CD4-positive, alpha-beta T cell (primary cell): ENCODE measurements at regions of chr2 and their contacts with region 1.

Region 1: DNA sequence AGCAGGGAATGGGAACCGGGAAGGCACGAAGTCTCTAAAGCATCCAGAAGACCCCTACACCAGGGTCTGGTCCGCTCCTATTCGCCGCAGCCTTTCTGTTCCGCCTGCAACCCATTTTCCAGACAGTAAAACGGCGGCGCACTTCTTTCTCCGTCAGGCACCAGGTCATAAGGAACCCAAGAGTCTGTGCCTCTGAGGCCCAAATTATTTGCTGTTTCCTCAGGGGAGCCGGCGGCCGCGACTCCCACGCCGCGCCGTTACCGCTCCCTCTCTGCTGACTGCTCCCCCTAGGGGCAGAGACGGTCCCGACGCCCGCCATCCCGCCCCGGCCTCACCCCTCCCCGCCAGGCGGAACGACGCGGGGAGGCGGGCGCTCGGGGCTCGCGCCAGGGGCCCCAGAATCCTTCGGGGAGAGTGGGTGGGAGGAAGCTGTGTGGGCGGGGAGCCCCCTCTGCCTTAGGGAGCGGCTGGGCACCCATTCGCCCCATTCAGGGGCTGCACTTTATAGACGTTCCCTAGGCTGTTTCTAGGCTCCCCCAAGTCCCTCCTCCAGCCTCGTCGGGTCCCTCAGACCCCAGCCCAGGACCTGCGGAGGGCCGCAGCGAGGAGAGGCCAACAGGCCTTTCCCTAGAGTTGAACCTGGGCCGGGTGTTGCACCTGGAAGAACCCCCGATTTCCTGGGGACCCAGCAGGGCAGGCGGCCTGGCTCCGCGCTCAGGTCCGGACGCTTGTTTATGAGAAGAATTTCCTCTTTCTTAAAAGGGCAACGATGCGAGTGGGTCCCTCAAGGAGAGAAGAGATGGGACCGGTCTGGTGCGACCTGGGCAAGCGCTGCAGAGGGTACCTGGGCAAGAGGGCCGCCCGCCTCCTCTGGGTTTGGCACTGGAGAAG is 3.6 kb upstream of the CTDSP1 start:
- DNase-seq: peak; percentile 88 to 98 (median 93)
- ATAC-seq: peak; percentile 67
- H3K4me3 ChIP-seq: peak overlapping the region; percentile 71
- H3K4me3 Mint-ChIP-seq: peak overlapping the region; percentile 94
- H3K27ac ChIP-seq: peak overlapping the region; percentile 93 to 96
- H3K27ac Mint-ChIP-seq: peak overlapping the region; percentile 99
- H3K4me1 ChIP-seq: peaks cover 58% of the 10 kb centered on the region
- H3K4me1 Mint-ChIP-seq: peaks cover 41% of the 10 kb centered on the region
- H3K27me3 ChIP-seq: no peaks in the 10 kb centered on the region
- H3K27me3 Mint-ChIP-seq: no peaks in the 10 kb centered on the region
- CTCF ChIP-seq: peak; percentile 75

Region 2: DNA sequence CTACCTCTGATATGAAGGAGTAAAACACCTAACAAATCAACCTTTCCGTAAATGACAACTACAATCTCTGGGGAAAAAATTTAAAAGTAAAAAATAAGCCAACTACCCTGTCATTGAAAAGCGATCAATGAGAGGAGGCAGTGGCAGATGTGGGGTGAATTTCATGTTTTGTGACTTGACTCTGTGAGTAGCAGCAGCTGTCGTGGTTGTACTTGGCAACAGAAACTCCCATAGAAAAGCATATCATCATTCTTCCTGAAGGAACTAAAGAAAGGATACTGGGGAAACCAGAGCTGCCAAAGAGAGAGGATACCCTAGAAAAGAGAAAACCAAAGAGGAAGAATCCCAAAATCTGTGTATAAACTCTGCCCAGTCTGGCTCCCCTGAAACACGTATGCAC is 629.7 kb before region 1 on chr2:
- CTCF ChIA-PET with region 1: no interaction called
- POLR2A ChIA-PET with region 1: no interaction called
- intact Hi-C with region 1: no loop called
- DNase-seq: no peak
- ATAC-seq: no peak
- H3K4me3 ChIP-seq: no peak overlapping the region
- H3K4me3 Mint-ChIP-seq: no peak overlapping the region
- H3K27ac ChIP-seq: no peak overlapping the region
- H3K27ac Mint-ChIP-seq: no peak overlapping the region
- H3K4me1 ChIP-seq: no peaks in the 10 kb centered on the region
- H3K4me1 Mint-ChIP-seq: no peaks in the 10 kb centered on the region
- H3K27me3 ChIP-seq: no peaks in the 10 kb centered on the region
- H3K27me3 Mint-ChIP-seq: peaks cover 9% of the 10 kb centered on the region
- CTCF ChIP-seq: no peak

Region 3: DNA sequence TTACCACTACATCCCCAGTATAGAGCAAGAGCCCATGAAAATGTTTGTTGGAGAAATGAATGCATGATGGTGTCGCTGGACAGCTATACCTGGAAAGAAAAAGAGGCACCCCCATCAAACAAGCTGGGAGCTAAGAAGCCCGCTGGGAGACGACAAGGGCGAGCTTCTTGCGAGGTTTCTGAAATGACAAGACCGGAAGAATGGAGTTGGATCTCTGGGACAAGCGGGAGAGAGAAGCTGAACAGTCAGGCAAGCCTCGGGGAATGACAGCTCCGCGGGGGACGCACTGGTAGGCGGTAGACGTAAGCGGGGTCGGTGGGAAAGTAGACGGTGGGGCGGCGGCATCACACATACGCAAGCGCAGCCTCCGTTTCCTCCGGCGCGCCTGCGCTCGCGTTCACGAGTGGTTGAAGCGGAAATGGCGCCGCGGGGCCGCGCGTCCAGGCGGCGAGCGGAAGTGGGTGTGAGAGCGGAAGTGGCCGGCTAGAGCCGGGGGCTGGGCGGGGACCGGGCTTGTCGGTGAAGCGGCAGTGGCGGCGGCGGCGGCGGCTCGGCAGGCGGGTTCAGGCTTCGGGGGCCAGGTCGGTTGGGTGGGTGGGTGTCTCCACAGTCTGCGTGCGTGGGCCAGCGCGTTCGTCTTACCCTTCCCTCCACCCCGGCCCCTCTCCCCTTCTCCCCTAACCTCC is 179.2 kb before region 1 on chr2 and contains the start of gene ARPC2:
- CTCF ChIA-PET with region 1: no interaction called
- POLR2A ChIA-PET with region 1: interaction called, 9 read pairs
- intact Hi-C with region 1: loop called (anchors 5 kb)
- DNase-seq: peak; percentile 90 to 98 (median 93)
- ATAC-seq: peak; percentile 73
- H3K4me3 ChIP-seq: peak within 1 kb of the TSS; percentile 80
- H3K4me3 Mint-ChIP-seq: peak within 1 kb of the TSS; percentile 95
- H3K27ac ChIP-seq: peak within 1 kb of the TSS; percentile 96 to 99
- H3K27ac Mint-ChIP-seq: peak within 1 kb of the TSS; percentile 96
- H3K4me1 ChIP-seq: peaks cover 36% of the 10 kb centered on the region
- H3K4me1 Mint-ChIP-seq: peaks cover 45% of the 10 kb centered on the region
- H3K27me3 ChIP-seq: no peaks in the 10 kb centered on the region
- H3K27me3 Mint-ChIP-seq: no peaks in the 10 kb centered on the region
- CTCF ChIP-seq: no peak
- total RNA-seq, gene ARPC2: 448 to 452 TPM

Region 4: DNA sequence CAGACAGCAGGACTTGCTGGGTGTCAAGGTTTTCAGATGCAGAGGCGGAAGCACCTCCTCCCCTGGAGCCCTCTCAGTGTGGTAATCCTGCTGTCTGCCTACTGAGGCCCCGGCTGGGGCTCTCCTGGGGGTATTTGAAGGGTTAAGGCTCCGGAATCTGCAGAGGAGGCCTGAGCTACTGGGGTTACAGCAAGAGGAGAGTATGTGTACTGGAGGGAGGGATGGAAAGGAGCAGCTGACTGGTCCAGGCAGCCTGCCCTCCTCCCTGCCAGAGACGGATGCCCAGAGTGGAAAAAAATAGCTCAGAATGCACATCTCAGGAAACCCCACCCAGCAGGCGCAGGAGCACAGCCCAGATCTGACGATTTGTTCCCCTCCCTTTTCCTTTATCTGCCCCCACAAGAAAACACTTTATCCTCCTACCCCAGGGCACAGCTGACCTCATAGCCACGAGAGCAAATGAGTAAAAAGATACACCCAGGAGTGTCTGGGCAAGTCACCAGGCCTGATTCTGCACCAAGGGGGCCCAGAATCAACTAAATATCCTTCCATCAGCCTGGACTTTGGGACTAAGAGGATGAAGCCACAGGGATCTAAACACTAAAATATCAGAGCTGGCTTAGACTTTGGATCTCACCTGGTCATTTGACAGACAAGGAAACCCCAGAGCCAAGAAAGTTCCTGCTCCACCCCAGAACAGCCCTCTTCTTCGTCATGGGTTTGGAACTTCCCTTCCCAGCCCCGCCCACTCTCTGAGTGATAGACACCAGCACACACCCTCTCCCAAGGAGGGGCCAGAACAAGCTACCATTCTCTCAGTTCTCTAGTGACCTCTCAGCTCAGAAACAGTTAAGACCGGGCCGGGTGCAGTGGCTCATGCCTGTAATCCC is 109.2 kb before region 1 on chr2:
- CTCF ChIA-PET with region 1: interaction called, 22 read pairs
- POLR2A ChIA-PET with region 1: interaction called, 45 read pairs
- intact Hi-C with region 1: loop called in 1 of 2 experiments (anchors 1 kb)
- DNase-seq: peak; percentile 49 to 96 (median 69)
- ATAC-seq: peak; percentile 58
- H3K4me3 ChIP-seq: peak overlapping the region; percentile 56
- H3K4me3 Mint-ChIP-seq: peak overlapping the region; percentile 91
- H3K27ac ChIP-seq: peak overlapping the region; percentile 95 to 98
- H3K27ac Mint-ChIP-seq: peak overlapping the region; percentile 99
- H3K4me1 ChIP-seq: peaks cover 100% of the 10 kb centered on the region
- H3K4me1 Mint-ChIP-seq: peaks cover 94% of the 10 kb centered on the region
- H3K27me3 ChIP-seq: no peaks in the 10 kb centered on the region
- H3K27me3 Mint-ChIP-seq: no peaks in the 10 kb centered on the region
- CTCF ChIP-seq: no peak

Region 5: GRCh38 chr2:218317232-218317630 is 78.8 kb before region 1 on chr2:
- CTCF ChIA-PET with region 1: interaction called, 10 read pairs
- POLR2A ChIA-PET with region 1: interaction called, 23 read pairs
- intact Hi-C with region 1: no loop called
- DNase-seq: no peak
- ATAC-seq: no peak
- H3K4me3 ChIP-seq: no peak overlapping the region
- H3K4me3 Mint-ChIP-seq: peak overlapping the region; percentile 40
- H3K27ac ChIP-seq: peak overlapping the region; percentile 60 to 67
- H3K27ac Mint-ChIP-seq: peak overlapping the region; percentile 97
- H3K4me1 ChIP-seq: peaks cover 47% of the 10 kb centered on the region
- H3K4me1 Mint-ChIP-seq: peaks cover 56% of the 10 kb centered on the region
- H3K27me3 ChIP-seq: no peaks in the 10 kb centered on the region
- H3K27me3 Mint-ChIP-seq: no peaks in the 10 kb centered on the region
- CTCF ChIP-seq: no peak

Region 6: DNA sequence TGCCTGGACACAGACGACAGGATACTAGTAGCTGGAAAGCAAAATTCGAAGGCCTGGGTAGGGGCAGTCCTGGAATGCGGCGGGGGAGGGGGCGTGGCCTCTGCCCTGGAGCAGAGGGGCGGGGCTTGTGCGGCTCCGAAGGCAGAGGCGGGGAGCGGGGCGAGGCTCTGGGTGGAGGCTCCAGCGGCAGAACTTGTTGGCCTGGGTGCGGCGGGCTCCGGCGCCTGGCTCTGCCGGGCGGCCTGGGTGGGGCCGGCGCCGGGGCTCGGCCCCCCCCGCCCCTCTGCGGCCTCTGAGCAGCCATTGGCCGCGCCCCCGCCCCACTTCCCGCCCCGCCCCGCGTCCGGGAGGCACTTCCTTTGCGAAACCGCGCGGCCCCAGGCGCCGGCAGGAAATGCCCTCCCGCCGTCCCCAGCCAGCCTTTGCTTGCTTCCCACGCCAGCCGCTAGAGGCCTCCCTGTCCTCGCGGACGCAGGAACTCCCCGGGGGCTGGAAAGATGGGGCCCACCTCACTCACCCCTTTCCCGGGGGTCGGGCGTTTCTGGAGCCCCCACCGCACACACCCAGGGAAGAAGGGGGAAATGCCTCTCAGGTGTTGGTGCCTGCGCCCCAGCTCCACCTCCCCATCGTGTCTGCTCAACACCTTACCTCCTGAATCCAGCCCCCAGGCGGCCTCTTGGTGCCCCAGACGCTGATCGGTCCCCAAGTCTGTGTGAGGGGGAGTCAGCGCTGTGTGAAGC is 10.3 kb after region 1 on chr2:
- CTCF ChIA-PET with region 1: interaction called, 3 read pairs
- POLR2A ChIA-PET with region 1: interaction called, 74 read pairs
- intact Hi-C with region 1: loop called (anchors 1 kb)
- DNase-seq: peak; percentile 73 to 97 (median 94)
- ATAC-seq: peak; percentile 69
- H3K4me3 ChIP-seq: peak overlapping the region; percentile 59
- H3K4me3 Mint-ChIP-seq: peak overlapping the region; percentile 90
- H3K27ac ChIP-seq: peak overlapping the region; percentile 61 to 78
- H3K27ac Mint-ChIP-seq: peak overlapping the region; percentile 88
- H3K4me1 ChIP-seq: peaks cover 68% of the 10 kb centered on the region
- H3K4me1 Mint-ChIP-seq: peaks cover 57% of the 10 kb centered on the region
- H3K27me3 ChIP-seq: no peaks in the 10 kb centered on the region
- H3K27me3 Mint-ChIP-seq: no peaks in the 10 kb centered on the region
- CTCF ChIP-seq: peak; percentile 67

Region 7: GRCh38 chr2:218659258-218659987 is 263.4 kb after region 1 on chr2 and contains the starts of genes BCS1L and ZNF142:
- CTCF ChIA-PET with region 1: no interaction called
- POLR2A ChIA-PET with region 1: interaction called, 12 read pairs
- intact Hi-C with region 1: no loop called
- DNase-seq: peak; percentile 82 to 95 (median 92)
- ATAC-seq: peak; percentile 98
- H3K4me3 ChIP-seq: peak within 1 kb of the TSS; percentile 79
- H3K4me3 Mint-ChIP-seq: peak within 1 kb of the TSS; percentile 95
- H3K27ac ChIP-seq: peak within 1 kb of the TSS; percentile 53 to 83
- H3K27ac Mint-ChIP-seq: peak within 1 kb of the TSS; percentile 89
- H3K4me1 ChIP-seq: peaks cover 19% of the 10 kb centered on the region
- H3K4me1 Mint-ChIP-seq: peaks cover 35% of the 10 kb centered on the region
- H3K27me3 ChIP-seq: no peaks in the 10 kb centered on the region
- H3K27me3 Mint-ChIP-seq: no peaks in the 10 kb centered on the region
- CTCF ChIP-seq: no peak
- total RNA-seq, gene BCS1L: 11.4 to 12.7 TPM
- total RNA-seq, gene ZNF142: 40.3 to 44.2 TPM